Mammary epithelial cell (primary cell): ENCODE measurements at regions of chr10 and their contacts with region 1.

Region 1: DNA sequence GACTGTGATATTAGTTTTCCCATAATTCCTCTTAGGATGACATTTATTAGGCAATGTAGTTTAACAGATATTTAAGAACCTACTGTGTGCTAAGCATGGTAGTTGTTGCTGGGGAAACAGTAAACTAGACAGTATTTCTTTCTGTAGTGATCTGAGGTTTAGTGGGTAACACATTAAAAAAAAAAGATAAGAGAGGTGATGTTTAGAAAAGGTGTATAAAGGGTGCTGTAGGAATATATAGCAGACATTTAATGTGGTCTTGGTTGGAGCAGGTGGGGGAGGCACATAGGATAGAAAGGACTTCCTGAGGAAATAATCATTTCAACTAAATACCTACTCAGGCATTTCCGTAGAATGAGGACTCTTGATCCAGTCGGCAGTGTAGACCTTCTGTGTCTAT is 11.9 kb downstream of the KIF11 start:
- DNase-seq: no peak
- H3K4me3 ChIP-seq: no peak overlapping the region
- H3K27ac ChIP-seq: no peak overlapping the region
- H3K4me1 ChIP-seq: peaks cover 7% of the 10 kb centered on the region
- H3K27me3 ChIP-seq: no peaks in the 10 kb centered on the region
- CTCF ChIP-seq: no peak

Region 2: GRCh38 chr10:92689663-92690210 is 84.9 kb after region 1 on chr10 and contains the start of gene HHEX:
- CTCF ChIA-PET with region 1: no interaction called
- dilution Hi-C with region 1: loop called (anchors 5 kb)
- in situ Hi-C with region 1: no loop called
- intact Hi-C with region 1: no loop called
- DNase-seq: peak; percentile 50
- H3K4me3 ChIP-seq: peak within 1 kb of the TSS; percentile 40 to 52 (median 45)
- H3K27ac ChIP-seq: no peak within 1 kb of the TSS
- H3K4me1 ChIP-seq: peaks cover 6% of the 10 kb centered on the region
- H3K27me3 ChIP-seq: peaks cover 7% of the 10 kb centered on the region
- CTCF ChIP-seq: no peak
- total RNA-seq, gene HHEX: 0.28 to 0.33 TPM